Activated CD4-positive, alpha-beta T cell treated with anti-CD3 and anti-CD28 coated beads for 36 hours (primary cell): ENCODE measurements at regions of chr9 and their contacts with region 1.

Region 1: GRCh38 chr9:136885950-136886578 is at the start of gene TRAF2:
- DNase-seq: peak; percentile 98
- ATAC-seq: peak; percentile 89
- H3K4me3 Mint-ChIP-seq: peak within 1 kb of the TSS; percentile 85
- H3K27ac Mint-ChIP-seq: peak within 1 kb of the TSS; percentile 95
- H3K4me1 Mint-ChIP-seq: peaks cover 51% of the 10 kb centered on the region
- H3K27me3 Mint-ChIP-seq: no peaks in the 10 kb centered on the region
- total RNA-seq, gene TRAF2: 37.4 to 46.2 TPM

Region 2: DNA sequence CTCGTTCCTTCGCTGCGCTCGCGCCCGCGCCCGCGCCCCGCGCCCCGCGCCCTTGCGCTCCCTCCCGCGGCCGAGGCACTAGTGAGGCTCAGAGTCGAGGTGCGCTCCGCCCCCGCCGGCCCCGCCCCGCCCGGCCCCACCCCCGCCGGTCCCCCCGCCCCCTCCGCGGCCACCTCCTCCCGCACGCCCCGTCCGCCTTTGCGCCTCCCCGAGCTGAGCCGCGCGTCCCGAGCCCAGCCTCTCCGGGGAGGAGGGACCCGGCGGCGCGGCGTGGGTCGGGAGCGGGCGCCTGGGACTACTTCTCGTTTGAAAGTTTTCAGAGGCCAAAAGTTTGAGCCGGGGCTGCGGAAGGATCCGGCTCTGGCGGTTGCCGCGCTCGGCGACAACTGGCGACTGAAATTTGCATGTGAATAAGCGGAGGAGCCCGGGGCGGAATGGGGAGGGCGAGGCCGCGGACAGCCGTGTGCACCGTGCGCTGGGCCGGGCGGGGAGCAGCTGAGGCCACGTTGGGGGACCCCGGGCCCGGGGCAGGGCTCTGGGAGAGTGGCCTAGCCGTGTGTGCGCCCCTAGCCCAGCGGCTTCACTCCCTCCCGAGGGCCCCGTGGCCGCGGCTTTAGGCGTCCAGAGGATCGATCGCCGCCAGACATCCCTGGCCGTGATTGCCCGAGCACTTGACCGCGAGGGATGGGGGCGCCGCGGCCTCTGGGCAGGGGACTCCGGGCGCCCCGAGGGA is 339.9 kb before region 1 on chr9 and contains the start of gene NOTCH1:
- CTCF ChIA-PET with region 1: no interaction called
- POLR2A ChIA-PET with region 1: no interaction called
- intact Hi-C with region 1: loop called in 1 of 2 experiments (anchors 2 kb)
- DNase-seq: peak; percentile 95
- ATAC-seq: peak; percentile 75
- H3K4me3 Mint-ChIP-seq: peak within 1 kb of the TSS; percentile 92
- H3K27ac Mint-ChIP-seq: peak within 1 kb of the TSS; percentile 88
- H3K4me1 Mint-ChIP-seq: peaks cover 34% of the 10 kb centered on the region
- H3K27me3 Mint-ChIP-seq: no peaks in the 10 kb centered on the region
- total RNA-seq, gene NOTCH1: 70.0 to 79.4 TPM

Region 3: GRCh38 chr9:136865735-136866103 is 20.3 kb before region 1 on chr9:
- CTCF ChIA-PET with region 1: interaction called, 3 read pairs
- POLR2A ChIA-PET with region 1: interaction called, 7 read pairs
- intact Hi-C with region 1: loop called (anchors 1 to 2 kb)
- DNase-seq: no peak
- ATAC-seq: no peak
- H3K4me3 Mint-ChIP-seq: peak overlapping the region; percentile 81
- H3K27ac Mint-ChIP-seq: peak overlapping the region; percentile 38
- H3K4me1 Mint-ChIP-seq: peaks cover 16% of the 10 kb centered on the region
- H3K27me3 Mint-ChIP-seq: no peaks in the 10 kb centered on the region

Region 4: DNA sequence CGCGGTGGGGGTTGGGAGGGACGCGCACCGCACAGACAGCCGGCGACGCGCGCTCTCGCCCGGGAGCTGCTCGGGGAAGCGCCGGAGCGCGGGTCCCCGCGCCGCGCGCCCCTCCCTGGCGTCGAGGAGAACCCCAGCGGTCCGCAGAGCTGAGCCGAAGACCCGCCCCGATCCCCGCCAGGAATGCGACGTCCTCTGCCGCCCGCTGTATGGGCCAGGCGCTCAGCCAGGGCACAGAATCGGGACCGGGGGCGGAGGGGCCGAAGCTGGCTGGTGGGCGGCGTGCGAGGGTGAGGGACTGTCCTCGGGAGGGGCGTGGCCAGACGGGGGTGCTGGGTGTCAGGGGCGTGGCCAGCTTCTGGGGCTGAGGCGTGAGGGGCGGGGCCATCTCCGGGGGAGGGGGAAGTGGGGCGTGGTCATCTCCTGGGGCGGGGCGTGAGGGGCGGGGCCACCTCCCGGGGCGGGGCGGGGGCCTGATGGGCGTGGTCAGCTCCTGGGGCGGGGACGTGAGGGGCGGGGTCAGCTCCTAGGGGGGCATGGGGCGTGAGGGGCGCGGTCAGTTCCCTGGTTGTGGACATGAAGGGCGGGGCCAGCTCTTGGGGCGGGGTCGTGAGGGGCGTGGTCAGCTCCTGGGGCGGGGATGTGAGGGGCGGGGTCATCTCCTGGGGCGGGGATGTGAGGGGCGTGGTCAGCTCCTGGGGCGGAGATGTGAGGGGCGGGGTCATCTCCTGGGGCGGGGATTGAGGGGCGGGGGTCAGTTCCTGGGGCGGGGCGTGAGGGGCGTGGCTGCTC is 92.2 kb after region 1 on chr9:
- CTCF ChIA-PET with region 1: no interaction called
- POLR2A ChIA-PET with region 1: no interaction called
- intact Hi-C with region 1: loop called in 1 of 2 experiments (anchors 1 kb)
- DNase-seq: peak; percentile 87
- ATAC-seq: peak; percentile 47
- H3K4me3 Mint-ChIP-seq: no peak overlapping the region
- H3K27ac Mint-ChIP-seq: no peak overlapping the region
- H3K4me1 Mint-ChIP-seq: peaks cover 13% of the 10 kb centered on the region
- H3K27me3 Mint-ChIP-seq: no peaks in the 10 kb centered on the region

Region 5: DNA sequence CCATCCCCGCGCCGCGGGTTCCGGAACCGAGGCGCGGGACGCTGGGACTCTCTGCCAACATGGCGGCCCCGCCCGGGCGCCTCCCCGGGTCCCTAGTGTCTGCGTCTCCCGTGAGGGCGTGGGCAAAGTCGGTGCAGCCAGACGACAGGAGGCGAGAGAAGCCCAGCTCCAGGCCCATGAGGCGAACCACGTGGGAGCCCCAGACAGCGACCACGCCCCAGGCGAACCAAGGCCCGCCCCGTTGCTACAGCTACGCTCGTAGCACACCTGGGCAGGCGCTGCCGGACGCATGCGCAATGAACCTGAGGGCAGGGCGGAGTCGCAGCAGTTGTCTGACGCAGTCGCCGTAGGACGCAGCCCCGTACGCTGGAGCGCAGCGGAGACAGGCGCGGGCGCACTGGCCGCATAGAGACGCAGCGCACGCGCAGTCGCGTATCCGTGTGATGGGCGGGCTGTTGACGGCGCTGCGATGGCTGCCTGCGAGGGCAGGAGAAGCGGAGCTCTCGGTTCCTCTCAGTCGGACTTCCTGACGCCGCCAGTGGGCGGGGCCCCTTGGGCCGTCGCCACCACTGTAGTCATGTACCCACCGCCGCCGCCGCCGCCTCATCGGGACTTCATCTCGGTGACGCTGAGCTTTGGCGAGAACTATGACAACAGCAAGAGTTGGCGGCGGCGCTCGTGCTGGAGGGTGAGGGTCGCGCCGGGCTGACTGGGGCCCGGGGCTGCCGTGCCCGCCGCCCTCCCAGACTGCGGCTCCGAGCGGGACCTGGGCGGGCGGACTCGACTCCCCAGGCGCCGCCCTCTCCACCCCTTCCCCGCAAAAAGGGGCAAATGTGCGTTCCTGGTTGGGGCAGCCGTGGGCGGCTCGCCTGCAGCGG is 200.7 kb after region 1 on chr9 and contains the start of gene MAN1B1:
- CTCF ChIA-PET with region 1: no interaction called
- POLR2A ChIA-PET with region 1: no interaction called
- intact Hi-C with region 1: loop called (anchors 1 to 2 kb)
- DNase-seq: peak; percentile 100
- ATAC-seq: peak; percentile 85
- H3K4me3 Mint-ChIP-seq: peak within 1 kb of the TSS; percentile 88
- H3K27ac Mint-ChIP-seq: peak within 1 kb of the TSS; percentile 96
- H3K4me1 Mint-ChIP-seq: peaks cover 46% of the 10 kb centered on the region
- H3K27me3 Mint-ChIP-seq: no peaks in the 10 kb centered on the region
- total RNA-seq, gene MAN1B1: 21.6 to 26.7 TPM

Region 6: DNA sequence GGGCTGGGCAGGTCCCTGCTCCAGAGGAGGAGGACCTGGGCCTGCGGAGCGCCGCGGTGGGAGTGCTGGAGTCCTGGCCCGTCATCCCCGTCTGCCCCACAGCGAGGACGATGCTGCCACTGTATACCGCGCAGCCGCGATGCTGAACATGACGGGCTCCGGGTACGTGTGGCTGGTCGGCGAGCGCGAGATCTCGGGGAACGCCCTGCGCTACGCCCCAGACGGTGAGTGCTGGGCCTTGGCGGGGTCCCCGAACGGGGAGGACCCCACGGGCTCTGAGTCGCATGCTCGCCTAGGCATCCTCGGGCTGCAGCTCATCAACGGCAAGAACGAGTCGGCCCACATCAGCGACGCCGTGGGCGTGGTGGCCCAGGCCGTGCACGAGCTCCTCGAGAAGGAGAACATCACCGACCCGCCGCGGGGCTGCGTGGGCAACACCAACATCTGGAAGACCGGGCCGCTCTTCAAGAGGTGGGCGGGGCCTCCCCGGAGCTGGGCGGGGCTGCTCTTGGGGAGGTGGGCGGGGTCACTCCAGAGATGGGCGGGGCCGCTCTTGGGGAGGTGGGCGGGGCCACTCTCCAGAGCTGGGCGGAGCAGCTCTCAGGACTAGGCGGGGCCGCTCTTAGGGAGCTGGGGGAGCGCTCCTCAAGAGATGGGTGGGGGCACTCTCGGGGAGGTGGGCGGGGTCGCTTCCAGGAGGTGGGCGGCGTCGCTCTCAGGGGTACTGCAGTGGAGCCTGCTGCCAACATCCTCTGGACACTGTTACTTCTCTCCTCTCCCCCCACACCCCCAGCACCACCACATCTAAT is 270.7 kb after region 1 on chr9:
- CTCF ChIA-PET with region 1: no interaction called
- POLR2A ChIA-PET with region 1: no interaction called
- intact Hi-C with region 1: no loop called
- DNase-seq: peak; percentile 85
- ATAC-seq: peak; percentile 79
- H3K4me3 Mint-ChIP-seq: peak overlapping the region; percentile 36
- H3K27ac Mint-ChIP-seq: no peak overlapping the region
- H3K4me1 Mint-ChIP-seq: peaks cover 11% of the 10 kb centered on the region
- H3K27me3 Mint-ChIP-seq: peaks cover 30% of the 10 kb centered on the region